ENCODE measurements at regions of chr13 and their contacts with region 1.

Region 1: DNA sequence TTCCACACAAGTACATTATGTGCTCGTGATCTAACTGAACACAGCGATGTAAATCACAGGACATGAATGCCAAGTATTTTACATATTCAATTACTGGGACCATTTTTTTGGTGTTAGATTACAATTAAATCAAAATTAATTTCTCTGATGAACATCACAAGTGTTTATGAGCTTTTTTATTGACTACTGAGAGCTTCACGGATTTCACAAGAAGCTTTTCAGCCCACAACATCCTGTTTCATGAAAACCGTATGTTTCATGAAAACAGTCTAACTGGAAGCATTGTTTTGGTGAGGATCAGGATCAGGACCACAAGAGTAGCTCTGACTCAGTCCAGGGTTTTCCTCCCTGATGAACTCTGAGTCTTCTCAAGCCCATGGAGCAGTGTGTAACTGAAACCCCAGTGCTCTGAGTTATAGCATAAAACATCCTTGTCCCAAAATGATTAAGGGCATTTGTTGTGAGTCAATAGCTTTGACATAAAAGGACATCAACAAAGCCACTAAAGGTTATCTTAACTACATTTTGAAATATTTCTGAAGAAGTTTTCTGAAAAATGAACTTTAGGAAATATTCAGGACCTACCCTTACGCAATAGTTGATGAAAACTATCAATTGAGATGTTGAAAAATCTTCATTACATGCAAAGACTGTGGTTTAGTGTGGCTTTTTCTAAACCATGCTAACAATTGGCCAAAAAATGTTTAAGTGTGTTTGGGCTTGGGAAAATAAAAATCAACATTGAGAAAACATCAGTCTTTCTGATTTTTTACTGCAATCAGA is 49.3 kb downstream of the UFM1 start:
- DNase-seq: no peak
- H3K4me3 ChIP-seq: no peak overlapping the region
- H3K27ac ChIP-seq: no peak overlapping the region
- H3K4me1 ChIP-seq: no peaks in the 10 kb centered on the region
- H3K27me3 ChIP-seq: no peaks in the 10 kb centered on the region
- CTCF ChIP-seq: no peak

Region 2: DNA sequence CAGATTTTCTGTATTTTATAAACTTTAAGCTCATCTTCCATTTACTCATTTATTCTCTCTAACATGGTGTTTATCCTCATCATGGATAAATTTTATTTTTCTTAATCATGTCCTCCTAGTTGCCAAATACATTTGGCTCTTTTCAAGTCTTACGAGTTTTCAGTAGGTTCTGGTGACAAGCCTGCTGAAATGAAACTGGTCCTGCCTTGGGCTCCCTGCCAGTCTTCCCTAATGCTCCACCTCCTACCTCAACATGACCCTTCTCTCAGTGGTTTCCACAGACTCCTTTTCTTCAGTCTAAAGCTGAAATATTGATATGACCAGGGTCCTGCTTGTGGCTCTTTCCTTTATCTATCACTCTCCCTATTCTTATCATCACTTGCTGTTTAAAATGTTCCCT is 610.6 kb before region 1 on chr13:
- intact Hi-C with region 1: no loop called
- DNase-seq: no peak
- H3K4me3 ChIP-seq: no peak overlapping the region
- H3K27ac ChIP-seq: no peak overlapping the region
- H3K4me1 ChIP-seq: no peaks in the 10 kb centered on the region
- H3K27me3 ChIP-seq: no peaks in the 10 kb centered on the region
- CTCF ChIP-seq: no peak

Region 3: DNA sequence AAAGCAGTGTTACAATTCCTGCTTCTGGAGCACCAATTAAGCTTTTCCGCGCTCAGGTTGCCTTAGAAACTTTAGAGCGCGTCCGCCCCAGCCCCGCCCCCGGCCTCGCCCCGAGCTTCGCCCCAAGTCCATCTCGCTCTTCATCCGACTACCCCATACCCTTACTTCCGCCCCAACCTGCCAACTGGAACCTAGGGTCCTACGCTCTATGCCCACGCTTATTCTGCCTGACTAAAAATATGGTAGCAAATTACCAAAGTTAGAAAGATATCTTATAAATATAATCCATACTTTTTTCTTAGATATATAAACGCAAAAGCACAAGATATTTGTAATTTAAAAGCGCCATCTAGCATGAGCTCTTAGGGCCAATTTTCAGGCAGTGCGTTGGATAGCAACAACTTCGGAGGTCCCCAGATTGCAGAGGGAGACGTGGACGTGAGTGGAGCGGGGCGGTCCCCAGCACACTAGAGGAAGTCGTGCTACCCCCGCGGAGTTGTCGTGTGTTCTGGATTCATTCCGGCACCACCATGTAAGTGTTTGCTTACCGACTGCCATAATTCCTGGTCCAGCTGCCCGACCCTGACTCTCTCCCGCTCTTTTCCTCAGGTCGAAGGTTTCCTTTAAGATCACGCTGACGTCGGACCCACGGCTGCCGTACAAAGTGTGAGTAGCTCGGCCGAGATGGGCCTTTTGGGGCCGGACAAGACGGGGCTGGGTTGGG is 49.4 kb before region 1 on chr13 and contains the start of gene UFM1:
- intact Hi-C with region 1: no loop called
- DNase-seq: peak; percentile 90
- H3K4me3 ChIP-seq: peak within 1 kb of the TSS; percentile 85
- H3K27ac ChIP-seq: peak within 1 kb of the TSS; percentile 92
- H3K4me1 ChIP-seq: peaks cover 57% of the 10 kb centered on the region
- H3K27me3 ChIP-seq: no peaks in the 10 kb centered on the region
- CTCF ChIP-seq: no peak
- total RNA-seq, gene UFM1: 26.1 TPM

Region 4: GRCh38 chr13:38960175-38960574 is 561.3 kb after region 1 on chr13:
- intact Hi-C with region 1: loop called (anchors 5 kb)
- DNase-seq: no peak
- H3K4me3 ChIP-seq: no peak overlapping the region
- H3K27ac ChIP-seq: no peak overlapping the region
- H3K4me1 ChIP-seq: no peaks in the 10 kb centered on the region
- H3K27me3 ChIP-seq: peaks cover 14% of the 10 kb centered on the region
- CTCF ChIP-seq: no peak